ENCODE measurements at regions of chr9 and their contacts with region 1.

Region 1: DNA sequence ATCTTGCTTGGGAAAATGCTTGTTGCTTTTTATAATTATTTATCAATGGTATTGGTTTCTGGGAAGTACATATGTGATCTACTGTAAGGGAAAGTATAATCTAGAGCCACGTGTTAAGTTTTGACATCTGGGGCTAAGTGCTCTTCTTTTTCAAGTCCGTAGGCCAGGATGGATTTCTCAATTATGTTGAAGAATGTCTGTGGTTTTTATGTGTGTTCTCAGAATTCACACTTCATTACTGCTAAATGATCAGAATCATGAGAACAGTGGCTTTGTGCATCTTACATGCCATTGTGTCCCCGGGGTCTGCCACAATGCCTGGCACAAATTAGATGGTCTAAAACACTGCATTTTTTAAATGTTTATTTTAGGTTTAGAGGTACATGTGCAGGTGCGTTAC is 14.5 kb upstream of the AUH start:
- DNase-seq: no peak
- ATAC-seq: no peak
- H3K4me3 ChIP-seq: no peak overlapping the region
- H3K27ac ChIP-seq: no peak overlapping the region
- H3K4me1 ChIP-seq: peaks cover 6% of the 10 kb centered on the region
- H3K27me3 ChIP-seq: no peaks in the 10 kb centered on the region
- CTCF ChIP-seq: no peak
- POLR2A ChIP-seq: no peak
- RAD21 ChIP-seq: no peak

Region 2: DNA sequence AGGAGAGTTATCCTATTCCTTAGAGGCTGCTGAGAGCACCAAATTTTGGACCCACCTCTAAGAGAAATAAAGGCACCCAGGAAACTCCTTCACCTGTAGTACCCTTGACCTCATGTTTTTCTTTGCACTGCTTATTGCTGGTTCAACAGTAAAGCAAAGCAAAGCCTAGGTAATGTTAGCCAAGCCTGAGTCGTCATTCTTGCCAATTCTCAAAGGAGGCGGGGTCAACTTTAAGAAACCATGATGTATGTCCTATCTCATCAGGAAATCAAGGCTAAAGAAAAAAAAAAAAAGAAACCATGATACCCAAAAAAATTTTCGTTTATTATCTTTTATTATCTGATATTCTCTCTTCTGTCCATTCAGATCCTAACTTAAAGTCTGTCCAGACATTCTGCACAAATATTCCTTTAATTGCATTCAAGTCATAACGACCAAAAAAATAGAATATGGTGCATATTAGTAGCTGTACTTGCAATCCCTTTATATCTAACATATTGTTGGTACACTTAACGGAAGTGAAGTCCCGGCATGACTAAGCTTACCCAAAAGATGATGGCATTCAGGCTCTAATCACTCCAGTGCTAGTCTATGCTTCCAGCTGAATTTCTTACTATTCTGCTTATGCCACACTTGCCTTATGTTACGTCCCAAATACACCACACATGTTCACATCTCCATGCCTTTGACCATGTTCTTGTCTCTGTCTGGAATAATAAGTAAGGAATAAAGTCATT is 16.3 kb before region 1 on chr9:
- CTCF ChIA-PET with region 1: no interaction called
- POLR2A ChIA-PET with region 1: no interaction called
- dilution Hi-C with region 1: no loop called
- in situ Hi-C with region 1: no loop called
- intact Hi-C with region 1: no loop called
- DNase-seq: no peak
- ATAC-seq: no peak
- H3K4me3 ChIP-seq: peak overlapping the region; percentile 100; the same call in 1 of the 2 replicates
- H3K27ac ChIP-seq: no peak overlapping the region
- H3K4me1 ChIP-seq: peaks cover 9% of the 10 kb centered on the region
- H3K27me3 ChIP-seq: no peaks in the 10 kb centered on the region
- CTCF ChIP-seq: no peak
- POLR2A ChIP-seq: no peak
- RAD21 ChIP-seq: no peak

Region 3: GRCh38 chr9:91580136-91580535 is 203.9 kb after region 1 on chr9:
- CTCF ChIA-PET with region 1: no interaction called
- POLR2A ChIA-PET with region 1: no interaction called
- dilution Hi-C with region 1: no loop called
- in situ Hi-C with region 1: no loop called
- intact Hi-C with region 1: loop called (anchors 1 kb)
- DNase-seq: peak; percentile 58
- ATAC-seq: peak; percentile 56
- H3K4me3 ChIP-seq: no peak overlapping the region
- H3K27ac ChIP-seq: no peak overlapping the region
- H3K4me1 ChIP-seq: no peaks in the 10 kb centered on the region
- H3K27me3 ChIP-seq: peaks cover 15% of the 10 kb centered on the region
- CTCF ChIP-seq: no peak
- POLR2A ChIP-seq: no peak
- RAD21 ChIP-seq: no peak

Region 4: GRCh38 chr9:91623004-91623403 is 246.8 kb after region 1 on chr9:
- CTCF ChIA-PET with region 1: no interaction called
- POLR2A ChIA-PET with region 1: no interaction called
- dilution Hi-C with region 1: no loop called
- in situ Hi-C with region 1: no loop called
- intact Hi-C with region 1: no loop called
- DNase-seq: no peak
- ATAC-seq: no peak
- H3K4me3 ChIP-seq: no peak overlapping the region
- H3K27ac ChIP-seq: no peak overlapping the region
- H3K4me1 ChIP-seq: no peaks in the 10 kb centered on the region
- H3K27me3 ChIP-seq: peaks cover 3% of the 10 kb centered on the region; the same call in 1 of the 2 replicates
- CTCF ChIP-seq: no peak
- POLR2A ChIP-seq: no peak
- RAD21 ChIP-seq: no peak

Region 5: DNA sequence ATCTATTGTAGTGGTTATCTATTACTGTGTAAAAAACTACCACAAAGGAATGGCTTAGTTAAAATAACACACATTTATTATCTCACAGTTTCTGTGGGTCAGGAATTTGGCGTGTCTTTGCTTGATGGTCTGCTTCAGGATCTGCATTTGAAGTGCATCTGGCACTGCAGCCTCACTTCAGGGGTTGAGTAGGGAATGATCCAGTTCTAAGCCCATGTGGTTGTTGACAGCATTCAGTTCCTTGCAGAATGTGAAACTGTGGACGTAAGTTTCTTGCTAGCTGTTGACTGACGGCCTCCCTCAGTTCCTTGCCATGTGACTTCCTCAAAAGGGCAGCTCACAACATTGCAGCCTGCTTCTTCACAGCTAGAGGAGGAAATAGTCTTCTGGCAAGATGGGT is 1030.2 kb after region 1 on chr9:
- CTCF ChIA-PET with region 1: interaction called, 11 read pairs
- POLR2A ChIA-PET with region 1: no interaction called
- dilution Hi-C with region 1: no loop called
- in situ Hi-C with region 1: no loop called
- intact Hi-C with region 1: no loop called
- DNase-seq: no peak
- ATAC-seq: no peak
- H3K4me3 ChIP-seq: no peak overlapping the region
- H3K27ac ChIP-seq: no peak overlapping the region
- H3K4me1 ChIP-seq: peaks cover 8% of the 10 kb centered on the region; the same call in 1 of the 2 replicates
- H3K27me3 ChIP-seq: no peaks in the 10 kb centered on the region
- CTCF ChIP-seq: no peak
- POLR2A ChIP-seq: no peak
- RAD21 ChIP-seq: no peak

Measured in IMR-90 (cell line).